ENCODE measurements at regions of chr14 and their contacts with region 1.

Region 1: GRCh38 chr14:104563742-104564615 is 15.6 kb upstream of the C14orf180 start:
- DNase-seq: peak; percentile 80 to 83 (median 81)
- ATAC-seq: peak; percentile 85 to 94 (median 88)
- H3K4me3 ChIP-seq: no peak overlapping the region
- H3K27ac ChIP-seq: no peak overlapping the region
- H3K4me1 ChIP-seq: no peaks in the 10 kb centered on the region
- H3K27me3 ChIP-seq: no peaks in the 10 kb centered on the region
- CTCF ChIP-seq: peak; percentile 71 to 83 (median 80)
- POLR2A ChIP-seq: no peak

Region 2: DNA sequence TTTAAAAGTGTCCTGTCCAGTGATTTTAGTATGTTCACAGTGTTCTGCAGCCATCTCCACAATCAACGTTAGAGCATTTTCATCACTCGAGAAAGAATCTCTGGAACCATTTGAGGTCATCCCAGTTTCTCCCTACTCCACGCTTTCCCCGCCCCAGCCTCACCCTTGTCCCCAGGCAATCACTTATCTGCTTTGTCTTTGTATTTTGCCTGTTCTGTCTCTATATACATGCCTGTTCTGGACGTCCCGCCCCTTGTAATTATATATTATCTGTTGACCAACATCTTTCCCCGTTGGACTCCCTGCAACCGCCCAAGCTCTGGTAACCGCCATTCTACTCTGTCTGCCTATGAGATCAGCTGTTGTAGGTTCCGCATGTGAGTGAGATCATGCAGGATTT is 500.0 kb before region 1 on chr14:
- intact Hi-C with region 1: loop called in 1 of 2 experiments (anchors 10 kb)
- DNase-seq: no peak
- ATAC-seq: no peak
- H3K4me3 ChIP-seq: no peak overlapping the region
- H3K27ac ChIP-seq: no peak overlapping the region
- H3K4me1 ChIP-seq: no peaks in the 10 kb centered on the region
- H3K27me3 ChIP-seq: no peaks in the 10 kb centered on the region
- CTCF ChIP-seq: no peak
- POLR2A ChIP-seq: no peak

Measured in right lobe of liver (tissue), 6 donors.